ENCODE measurements at regions of chrX and their contacts with region 1.

Region 1: DNA sequence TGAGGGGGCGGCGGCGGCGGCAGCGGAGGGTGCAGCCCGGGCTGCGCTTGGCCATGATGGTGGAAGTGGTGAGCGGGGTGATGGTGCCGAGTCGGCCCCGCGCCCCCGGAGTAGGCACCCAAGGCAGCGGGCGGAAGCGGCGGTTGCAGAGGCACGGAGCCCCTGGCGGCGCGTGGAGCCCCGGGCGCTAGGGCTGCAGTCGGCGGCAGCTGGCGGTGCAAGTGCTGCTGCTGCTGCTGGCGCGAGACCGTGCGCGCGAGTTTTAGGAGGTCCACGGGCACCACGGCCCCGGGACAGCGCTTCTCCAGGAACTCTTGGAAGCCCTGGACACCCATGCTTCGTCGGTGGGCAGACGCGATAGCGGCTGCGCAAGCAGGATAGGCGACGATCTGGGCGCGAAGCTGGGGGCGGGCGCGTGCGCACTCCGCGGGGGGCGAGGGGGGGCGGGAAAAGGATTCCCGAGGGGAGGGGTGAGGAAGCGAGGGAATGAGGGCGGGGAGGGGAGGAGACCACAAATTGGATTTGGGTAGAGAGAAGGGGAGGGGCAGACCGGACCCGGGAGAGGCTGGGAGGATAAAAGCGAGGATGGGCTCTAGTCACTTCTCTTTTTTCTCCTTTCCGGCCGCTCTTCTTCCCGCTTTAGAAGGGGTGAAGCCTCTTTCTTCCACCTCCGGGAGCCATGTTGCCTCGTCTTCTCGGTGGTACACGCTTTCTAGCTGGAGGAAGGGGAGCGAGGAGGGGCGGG is at the start of gene FAM120C:
- DNase-seq: peak; percentile 41
- ATAC-seq: peak; percentile 79
- H3K4me3 Mint-ChIP-seq: peak within 1 kb of the TSS; percentile 83
- H3K27ac Mint-ChIP-seq: peak within 1 kb of the TSS; percentile 85
- H3K4me1 Mint-ChIP-seq: peaks cover 41% of the 10 kb centered on the region
- H3K27me3 Mint-ChIP-seq: no peaks in the 10 kb centered on the region
- CTCF ChIP-seq: no peak
- total RNA-seq, gene FAM120C: 14.0 and 20.2 TPM in 2 replicates

Region 2: DNA sequence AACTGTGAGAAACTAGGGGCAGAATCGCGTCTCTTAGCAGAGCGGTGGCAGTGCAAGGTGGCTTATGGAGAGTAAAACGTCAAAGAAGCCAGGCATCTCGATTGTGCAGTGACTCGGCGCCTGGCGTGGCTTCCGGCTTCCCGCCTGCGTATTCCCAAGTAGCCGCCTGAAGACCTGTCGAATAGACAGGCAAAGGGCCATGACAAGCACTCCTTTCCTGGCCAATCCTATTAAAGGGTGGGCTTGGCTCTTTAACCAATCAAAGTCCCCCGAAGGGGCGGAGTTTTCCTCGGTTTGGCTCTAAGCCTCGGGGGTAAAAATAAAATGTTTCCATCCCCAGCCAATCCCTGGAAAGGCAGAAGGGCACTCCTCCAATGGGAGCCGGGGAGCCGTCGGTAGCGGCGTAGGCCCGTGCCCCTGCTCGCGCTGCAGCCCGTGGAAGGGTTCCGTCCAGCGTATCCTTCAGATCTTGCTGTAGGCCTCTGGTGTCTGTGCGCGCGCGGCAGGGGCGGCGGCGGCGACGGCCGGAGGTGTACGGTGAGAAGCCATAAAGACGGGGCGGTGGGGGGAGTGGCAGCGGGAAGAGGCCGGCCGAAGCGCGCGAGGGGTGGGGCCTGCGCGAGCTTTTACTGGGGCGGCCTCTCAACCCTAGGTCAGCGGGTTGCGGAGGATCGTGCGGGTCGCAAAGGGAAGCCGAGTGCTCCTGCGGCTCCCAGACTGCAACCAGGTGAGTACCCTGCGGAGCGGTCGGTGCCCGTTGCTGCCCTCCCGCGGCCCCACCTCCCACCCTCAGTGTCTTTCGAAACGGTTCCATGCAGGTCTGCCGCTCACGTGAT is 1089.1 kb before region 1 on chrX and contains the start of gene KANTR:
- CTCF ChIA-PET with region 1: no interaction called
- POLR2A ChIA-PET with region 1: no interaction called
- intact Hi-C with region 1: loop called (anchors 5 kb)
- DNase-seq: peak; percentile 67
- ATAC-seq: peak; percentile 79
- H3K4me3 Mint-ChIP-seq: peak within 1 kb of the TSS; percentile 88
- H3K27ac Mint-ChIP-seq: peak within 1 kb of the TSS; percentile 85
- H3K4me1 Mint-ChIP-seq: peaks cover 20% of the 10 kb centered on the region
- H3K27me3 Mint-ChIP-seq: no peaks in the 10 kb centered on the region
- CTCF ChIP-seq: no peak
- total RNA-seq, gene KANTR: 11.2 and 12.0 TPM in 2 replicates

Region 3: DNA sequence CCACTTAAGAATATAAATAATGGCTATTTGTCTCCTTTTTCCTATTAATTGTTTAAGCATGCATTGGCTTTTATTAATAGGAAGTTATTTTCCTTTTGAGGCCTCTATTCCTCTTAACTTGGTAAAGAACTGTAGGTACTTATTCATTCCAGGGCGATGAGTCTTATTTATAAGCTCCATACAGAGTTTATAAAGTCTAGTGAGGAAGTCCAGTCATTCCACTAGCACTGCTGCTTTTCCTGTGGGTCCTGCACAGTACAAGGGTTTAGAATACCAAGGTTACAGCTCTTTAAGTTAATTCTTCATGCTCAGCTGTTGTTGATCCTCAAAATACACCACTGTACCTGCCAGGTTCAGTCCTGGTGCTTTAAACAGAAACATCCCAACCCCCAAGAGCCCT is 203.3 kb after region 1 on chrX:
- CTCF ChIA-PET with region 1: no interaction called
- POLR2A ChIA-PET with region 1: no interaction called
- intact Hi-C with region 1: no loop called
- DNase-seq: no peak
- ATAC-seq: no peak
- H3K4me3 Mint-ChIP-seq: no peak overlapping the region
- H3K27ac Mint-ChIP-seq: no peak overlapping the region
- H3K4me1 Mint-ChIP-seq: no peaks in the 10 kb centered on the region
- H3K27me3 Mint-ChIP-seq: no peaks in the 10 kb centered on the region
- CTCF ChIP-seq: no peak

Region 4: DNA sequence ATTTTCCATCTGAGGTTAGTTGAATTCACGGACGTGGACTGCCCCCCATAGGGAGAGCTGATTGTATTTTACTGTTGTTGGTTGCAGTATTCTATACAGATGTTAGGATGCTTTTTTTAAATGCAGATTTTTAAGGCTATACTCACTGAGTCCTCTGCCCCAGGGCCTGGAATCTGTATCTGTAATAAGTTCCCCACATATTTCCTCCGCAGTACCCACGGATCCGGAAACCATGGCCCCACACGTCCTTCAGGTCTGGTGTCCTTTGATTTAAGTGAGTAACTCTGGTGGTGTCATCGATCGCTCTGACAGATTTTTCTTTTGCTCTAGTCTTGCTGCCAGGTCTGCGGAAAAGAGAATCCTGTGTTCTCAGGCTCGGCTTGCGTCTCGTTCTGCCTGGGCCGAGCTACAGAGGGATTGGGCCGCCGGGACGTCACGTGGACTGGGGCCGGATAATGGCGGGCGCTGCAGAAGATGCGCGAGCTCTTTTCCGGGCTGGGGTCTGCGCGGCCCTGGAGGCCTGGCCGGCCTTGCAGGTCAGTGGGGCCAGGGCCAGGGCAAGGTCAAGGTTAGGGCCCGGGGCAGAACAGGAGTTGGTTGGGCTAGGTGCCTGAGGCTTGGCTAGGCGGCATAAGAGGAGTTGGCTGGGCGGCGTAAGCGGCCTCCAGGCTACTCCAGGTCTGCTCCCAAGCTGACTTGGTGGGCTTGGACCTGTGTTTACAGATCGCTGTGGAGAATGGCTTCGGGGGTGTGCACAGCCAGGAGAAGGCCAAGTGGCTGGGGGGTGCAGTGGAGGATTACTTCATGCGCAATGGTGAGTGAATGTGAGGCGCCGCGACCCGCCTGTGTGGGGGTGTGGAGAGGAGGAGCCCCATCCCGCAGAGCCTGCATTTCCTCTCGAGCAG is 257.2 kb after region 1 on chrX and contains the start of gene TSR2:
- CTCF ChIA-PET with region 1: no interaction called
- POLR2A ChIA-PET with region 1: interaction called, 7 read pairs
- intact Hi-C with region 1: loop called (anchors 1 kb)
- DNase-seq: peak; percentile 59
- ATAC-seq: peak; percentile 98
- H3K4me3 Mint-ChIP-seq: peak within 1 kb of the TSS; percentile 91
- H3K27ac Mint-ChIP-seq: peak within 1 kb of the TSS; percentile 76
- H3K4me1 Mint-ChIP-seq: peaks cover 29% of the 10 kb centered on the region
- H3K27me3 Mint-ChIP-seq: no peaks in the 10 kb centered on the region
- CTCF ChIP-seq: no peak
- total RNA-seq, gene TSR2: 35.9 and 42.4 TPM in 2 replicates

Region 5: DNA sequence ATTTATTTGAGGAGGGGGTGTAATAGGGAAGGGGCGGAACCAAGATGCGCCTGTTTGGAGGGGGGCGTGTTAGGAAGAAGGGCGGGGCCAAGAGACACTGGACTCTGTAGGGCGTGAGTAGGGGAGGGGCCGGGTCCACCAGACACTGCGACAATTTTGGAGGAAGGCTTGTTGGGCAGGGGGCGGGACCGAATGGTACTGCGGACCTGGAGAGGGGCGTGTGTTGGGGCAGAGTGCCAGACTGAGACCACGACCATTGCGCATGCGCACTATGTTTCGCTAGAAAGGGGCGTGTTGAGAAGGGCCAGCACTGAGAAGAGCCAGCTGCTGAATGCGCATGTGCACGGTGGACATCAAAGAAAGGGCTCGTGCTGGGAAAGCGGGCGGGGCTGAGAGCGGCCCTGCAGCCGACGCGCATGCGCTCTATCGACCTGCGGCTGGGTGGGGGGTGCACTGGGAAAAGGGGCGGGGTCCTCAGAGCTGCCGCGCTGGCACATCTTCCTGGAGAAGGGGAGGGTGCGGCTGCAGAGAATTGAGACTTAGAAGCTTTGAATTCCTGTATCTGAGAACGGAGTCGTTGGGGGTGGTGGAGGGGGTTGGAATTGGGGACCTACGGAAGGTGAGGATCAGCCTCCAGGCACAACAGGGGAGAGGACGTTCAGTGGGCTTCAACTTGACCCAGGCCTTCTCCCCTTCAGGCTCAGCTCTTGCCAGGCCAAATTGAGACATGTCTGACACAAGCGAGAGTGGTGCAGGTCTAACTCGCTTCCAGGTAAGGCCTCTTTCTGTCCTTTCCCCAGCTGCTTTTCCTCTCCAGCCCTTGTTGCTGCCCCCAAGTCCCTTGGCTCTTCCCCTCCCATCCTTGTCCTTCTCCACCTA is 625.8 kb after region 1 on chrX:
- CTCF ChIA-PET with region 1: no interaction called
- POLR2A ChIA-PET with region 1: no interaction called
- intact Hi-C with region 1: loop called (anchors 5 kb)
- DNase-seq: peak; percentile 73
- ATAC-seq: peak; percentile 96
- H3K4me3 Mint-ChIP-seq: peak overlapping the region; percentile 92
- H3K27ac Mint-ChIP-seq: peak overlapping the region; percentile 91
- H3K4me1 Mint-ChIP-seq: peaks cover 14% of the 10 kb centered on the region
- H3K27me3 Mint-ChIP-seq: no peaks in the 10 kb centered on the region
- CTCF ChIP-seq: no peak

Measured in activated B cell treated with CpG ODN at 0.5 μM for 24 hours (primary cell).